ENCODE measurements at regions of chr17 and their contacts with region 1.

Region 1: GRCh38 chr17:81142301-81143199 is 22.8 kb upstream of the PVALEF start:
- DNase-seq: peak in 1 of 2 donors; percentile 87
- H3K4me3 ChIP-seq: no peak overlapping the region
- H3K27ac ChIP-seq: no peak overlapping the region
- H3K4me1 ChIP-seq: no peaks in the 10 kb centered on the region
- H3K27me3 ChIP-seq: no peaks in the 10 kb centered on the region
- CTCF ChIP-seq: peak; percentile 67 to 77 (median 72)

Region 2: DNA sequence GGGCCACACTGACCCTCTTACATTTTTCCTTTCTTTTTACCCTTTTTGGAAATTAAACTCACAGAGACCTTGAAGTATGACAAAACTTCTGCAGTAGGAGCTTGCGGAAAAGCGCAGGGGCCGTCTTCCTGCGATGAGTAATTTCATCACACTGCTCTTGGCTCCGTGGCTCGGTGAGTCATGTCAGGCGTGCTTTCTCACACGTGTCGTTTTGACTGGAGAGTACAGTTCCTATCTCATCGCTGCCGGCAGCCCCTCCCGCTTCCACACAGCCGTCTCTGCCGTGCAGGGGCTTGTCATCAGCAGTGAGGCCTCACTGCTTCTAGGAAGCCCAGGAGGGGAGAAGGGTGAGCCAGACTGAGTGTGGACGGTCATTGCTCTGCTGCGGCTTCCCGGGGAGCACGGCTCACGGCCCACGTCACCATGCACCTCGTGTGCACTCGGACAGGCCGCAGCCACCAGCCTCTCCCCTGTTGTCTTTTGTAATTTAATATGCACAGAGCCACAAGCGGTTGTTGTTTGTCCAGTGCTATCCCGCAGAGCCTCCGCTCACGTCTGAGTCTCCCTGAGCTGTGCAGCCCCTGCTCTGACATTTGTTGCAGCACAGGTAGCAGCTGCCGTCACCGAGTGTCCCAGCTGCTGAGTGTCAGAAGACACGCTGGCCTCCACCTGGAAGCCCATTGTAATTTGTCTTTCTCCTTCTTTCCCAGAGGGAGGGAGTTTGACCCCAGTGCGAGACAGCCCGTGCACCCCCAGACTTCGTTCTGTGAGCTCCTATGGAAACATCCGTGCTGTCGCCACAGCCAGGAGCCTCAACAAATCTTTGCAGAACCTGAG is 250.3 kb before region 1 on chr17:
- intact Hi-C with region 1: no loop called
- DNase-seq: peak in 1 of 2 donors; percentile 66
- H3K4me3 ChIP-seq: peak overlapping the region in 1 of 2 donors; percentile 35
- H3K27ac ChIP-seq: peak overlapping the region in 1 of 2 donors; percentile 83
- H3K4me1 ChIP-seq: peaks cover 0 to 4% of the 10 kb centered on the region in 2 donors
- H3K27me3 ChIP-seq: no peaks in the 10 kb centered on the region
- CTCF ChIP-seq: no peak

Region 3: GRCh38 chr17:81207610-81208581 is 65.3 kb after region 1 on chr17:
- intact Hi-C with region 1: loop called (anchors 2 kb)
- DNase-seq: no peak
- H3K4me3 ChIP-seq: no peak overlapping the region
- H3K27ac ChIP-seq: no peak overlapping the region
- H3K4me1 ChIP-seq: peaks cover 0 to 6% of the 10 kb centered on the region in 2 donors
- H3K27me3 ChIP-seq: no peaks in the 10 kb centered on the region
- CTCF ChIP-seq: no peak

Region 4: GRCh38 chr17:81222906-81223761 is 80.6 kb after region 1 on chr17 and contains the start of gene CEP131:
- intact Hi-C with region 1: no loop called
- DNase-seq: peak; percentile 96 to 99
- H3K4me3 ChIP-seq: peak within 1 kb of the TSS; percentile 79 to 87
- H3K27ac ChIP-seq: peak within 1 kb of the TSS in 1 of 2 donors; percentile 46
- H3K4me1 ChIP-seq: peaks cover 0 to 17% of the 10 kb centered on the region in 2 donors
- H3K27me3 ChIP-seq: no peaks in the 10 kb centered on the region
- CTCF ChIP-seq: no peak
- total RNA-seq, gene CEP131: 6.7 TPM

Region 5: GRCh38 chr17:81238817-81239600 is 96.5 kb after region 1 on chr17 and contains the starts of genes NDUFAF8 and TEPSIN:
- intact Hi-C with region 1: loop called (anchors 1 kb)
- DNase-seq: peak; percentile 94 to 99
- H3K4me3 ChIP-seq: peak within 1 kb of the TSS; percentile 88 to 95
- H3K27ac ChIP-seq: peak within 1 kb of the TSS; percentile 66 to 84
- H3K4me1 ChIP-seq: peaks cover 6 to 23% of the 10 kb centered on the region in 2 donors
- H3K27me3 ChIP-seq: no peaks in the 10 kb centered on the region
- CTCF ChIP-seq: no peak
- total RNA-seq, gene NDUFAF8: 6.5 TPM
- total RNA-seq, gene TEPSIN: 117 TPM

Measured in ascending aorta (tissue), 2 donors.